ENCODE measurements at regions of chr2 and their contacts with region 1.

Region 1: GRCh38 chr2:65382776-65383357 is 49.5 kb downstream of the SPRED2 start:
- DNase-seq: peak; percentile 75 to 83
- ATAC-seq: peak; percentile 36 to 86 (median 80)
- H3K4me3 ChIP-seq: peak overlapping the region in 7 of 10 donors; percentile 8 to 36 (median 29)
- H3K27ac ChIP-seq: peak overlapping the region; percentile 5 to 87 (median 70)
- H3K4me1 ChIP-seq: peaks cover 13 to 91% (median 69%) of the 10 kb centered on the region in 9 donors
- H3K27me3 ChIP-seq: no peaks in the 10 kb centered on the region
- CTCF ChIP-seq: peak in 3 of 9 donors; percentile 14 to 25 (median 22)

Region 2: GRCh38 chr2:65309708-65310107 is 73.2 kb before region 1 on chr2:
- intact Hi-C with region 1: loop called in 3 of 10 experiments (anchors 2 to 5 kb)
- DNase-seq: no peak
- ATAC-seq: peak in 2 of 8 donors; percentile 14 to 16
- H3K4me3 ChIP-seq: peak overlapping the region in 1 of 10 donors; percentile 9
- H3K27ac ChIP-seq: peak overlapping the region; percentile 52 to 90 (median 82)
- H3K4me1 ChIP-seq: peaks cover 9 to 50% (median 22%) of the 10 kb centered on the region in 9 donors
- H3K27me3 ChIP-seq: no peaks in the 10 kb centered on the region
- CTCF ChIP-seq: no peak

Region 3: DNA sequence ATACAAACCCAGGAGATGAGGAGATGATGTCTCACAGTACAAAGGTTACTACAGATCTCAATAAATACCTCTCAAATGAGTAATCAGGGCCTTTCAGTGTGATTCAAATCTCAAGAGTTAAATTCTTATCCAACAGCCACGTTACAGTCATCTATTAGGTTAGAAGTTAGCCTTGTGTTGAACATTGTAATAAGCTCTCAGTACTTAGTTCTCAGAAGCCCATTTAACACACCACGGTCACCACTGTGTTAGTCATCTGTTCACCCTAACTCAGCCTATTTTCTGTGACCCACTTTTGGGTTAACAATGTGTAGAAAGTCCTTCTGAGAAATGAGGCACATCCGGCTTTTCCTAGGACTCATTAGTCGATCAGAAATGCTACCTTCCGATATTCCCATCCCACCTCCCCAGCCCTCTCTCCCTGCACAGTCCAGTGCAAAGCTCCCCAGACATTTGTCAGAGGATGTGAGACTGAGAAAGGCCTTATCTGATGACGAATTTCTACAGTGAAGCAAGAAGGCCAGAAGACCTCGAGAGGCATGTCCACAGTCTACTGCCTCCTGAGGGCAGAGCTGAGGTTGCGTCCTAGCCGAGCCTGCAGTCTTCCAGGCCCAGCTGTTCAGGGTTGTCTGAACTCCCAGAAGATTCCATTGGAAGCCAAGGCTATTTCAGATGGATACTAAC is 62.7 kb before region 1 on chr2:
- intact Hi-C with region 1: no loop called
- DNase-seq: peak in 1 of 2 donors; percentile 33
- ATAC-seq: peak in 7 of 8 donors; percentile 29 to 84 (median 58)
- H3K4me3 ChIP-seq: no peak overlapping the region
- H3K27ac ChIP-seq: peak overlapping the region in 2 of 10 donors; percentile 28 to 47
- H3K4me1 ChIP-seq: peaks cover 0 to 18% (median 0%) of the 10 kb centered on the region in 9 donors
- H3K27me3 ChIP-seq: no peaks in the 10 kb centered on the region
- CTCF ChIP-seq: peak in 1 of 9 donors; percentile 30

Region 4: GRCh38 chr2:65349863-65350262 is 33.0 kb before region 1 on chr2:
- intact Hi-C with region 1: loop called in 1 of 10 experiments (anchors 5 kb)
- DNase-seq: peak; percentile 68 to 74
- ATAC-seq: peak in 5 of 8 donors; percentile 39 to 74 (median 65)
- H3K4me3 ChIP-seq: no peak overlapping the region
- H3K27ac ChIP-seq: peak overlapping the region in 5 of 10 donors; percentile 9 to 79 (median 55)
- H3K4me1 ChIP-seq: peaks cover 14 to 74% (median 55%) of the 10 kb centered on the region in 9 donors
- H3K27me3 ChIP-seq: no peaks in the 10 kb centered on the region
- CTCF ChIP-seq: no peak

Region 5: DNA sequence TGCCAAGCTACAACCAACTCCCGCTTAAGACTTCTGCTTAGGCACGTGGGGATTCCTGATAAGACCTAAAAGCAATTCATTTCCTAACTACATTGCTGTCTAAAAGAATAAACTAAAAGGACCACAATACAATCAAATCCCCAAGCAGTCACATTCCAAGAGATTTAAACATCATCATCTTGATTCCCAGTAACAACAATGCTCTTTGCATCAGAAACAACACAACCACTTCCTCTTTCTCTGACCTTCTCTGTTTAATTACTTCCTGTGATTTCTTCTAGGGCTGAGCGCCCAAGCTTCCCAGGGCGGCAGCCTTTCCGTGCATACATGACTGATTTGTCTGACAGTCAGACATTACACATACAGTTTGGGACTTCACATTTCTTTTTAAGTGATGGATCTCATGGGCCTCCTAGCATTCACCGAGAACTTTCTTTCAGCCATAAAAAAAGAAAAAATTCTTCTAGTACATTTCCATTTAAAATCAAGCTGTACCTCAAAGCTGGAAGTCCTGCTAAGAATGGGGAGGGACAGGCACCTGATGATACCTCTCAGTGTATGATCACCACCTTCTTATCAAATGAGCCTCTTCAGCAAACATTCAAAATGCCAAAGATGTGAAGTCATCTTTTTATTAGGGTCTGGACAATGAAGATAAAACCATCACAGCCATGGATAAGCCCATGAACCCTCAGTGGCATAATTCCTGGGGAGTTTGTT is 38.0 kb after region 1 on chr2:
- intact Hi-C with region 1: loop called in 1 of 10 experiments (anchors 5 kb)
- DNase-seq: peak in 1 of 2 donors; percentile 21
- ATAC-seq: peak in 7 of 8 donors; percentile 53 to 89 (median 76)
- H3K4me3 ChIP-seq: no peak overlapping the region
- H3K27ac ChIP-seq: peak overlapping the region in 5 of 10 donors; percentile 1 to 21 (median 15)
- H3K4me1 ChIP-seq: peaks cover 5 to 73% (median 47%) of the 10 kb centered on the region in 9 donors
- H3K27me3 ChIP-seq: no peaks in the 10 kb centered on the region
- CTCF ChIP-seq: no peak

Measured in heart right ventricle (tissue), 16 donors.